Activated T-helper 1 cell treated with anti-CD3 and anti-CD28 coated beads, Interleukin-12 subunit alpha, Interleukin-12 subunit beta, Interleukin-2, Interleukin-4 antibody, amounts not matched to agents 30 ng/mL and 10 ng/mL and 1 ng/mL, durations not matched to agents 14 hours and 24 hours and 36 hours (primary cell): ENCODE measurements at regions of chr12 and their contacts with region 1.

Region 1: DNA sequence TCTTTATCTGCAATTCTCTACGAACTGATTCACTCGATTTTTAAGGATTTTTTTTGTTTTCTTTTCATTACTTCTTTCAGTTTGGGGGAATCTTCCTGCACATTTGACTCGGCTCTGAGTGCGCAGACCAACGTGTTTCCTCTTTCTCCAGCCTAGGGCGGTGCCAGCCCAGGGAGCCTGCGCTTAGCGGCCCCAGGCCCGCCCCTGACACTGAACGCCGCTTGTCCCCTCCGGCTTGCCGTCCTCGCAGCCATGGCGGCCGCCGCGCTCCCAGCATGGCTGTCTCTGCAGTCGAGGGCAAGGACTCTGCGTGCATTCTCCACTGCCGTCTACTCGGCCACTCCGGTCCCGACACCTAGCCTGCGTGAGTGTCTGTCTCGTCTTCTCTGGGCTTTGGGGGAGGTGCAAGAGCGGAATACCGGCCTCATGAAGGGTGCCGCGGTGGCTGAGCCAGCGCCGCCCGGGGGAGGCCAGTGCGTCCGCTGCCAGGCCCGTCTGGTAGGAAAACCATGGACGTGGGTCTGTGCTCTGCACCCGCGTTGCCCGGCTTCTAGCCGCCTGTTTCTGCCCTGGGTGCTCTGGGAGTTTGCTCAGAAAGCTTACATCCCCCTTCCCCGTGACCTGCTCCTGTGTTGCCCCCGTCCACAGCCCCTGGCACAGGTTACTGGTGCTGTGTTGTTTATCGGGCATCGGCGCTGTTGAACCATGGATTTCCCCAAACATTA is at the start of gene MRPS35:
- DNase-seq: peak; percentile 89
- H3K4me3 Mint-ChIP-seq: peak within 1 kb of the TSS; percentile 97
- H3K27ac Mint-ChIP-seq: peak within 1 kb of the TSS; percentile 96
- H3K4me1 Mint-ChIP-seq: peaks cover 26% of the 10 kb centered on the region
- H3K27me3 Mint-ChIP-seq: peaks cover 10% of the 10 kb centered on the region
- total RNA-seq, gene MRPS35: 59.8 and 72.2 TPM in 2 replicates

Region 2: DNA sequence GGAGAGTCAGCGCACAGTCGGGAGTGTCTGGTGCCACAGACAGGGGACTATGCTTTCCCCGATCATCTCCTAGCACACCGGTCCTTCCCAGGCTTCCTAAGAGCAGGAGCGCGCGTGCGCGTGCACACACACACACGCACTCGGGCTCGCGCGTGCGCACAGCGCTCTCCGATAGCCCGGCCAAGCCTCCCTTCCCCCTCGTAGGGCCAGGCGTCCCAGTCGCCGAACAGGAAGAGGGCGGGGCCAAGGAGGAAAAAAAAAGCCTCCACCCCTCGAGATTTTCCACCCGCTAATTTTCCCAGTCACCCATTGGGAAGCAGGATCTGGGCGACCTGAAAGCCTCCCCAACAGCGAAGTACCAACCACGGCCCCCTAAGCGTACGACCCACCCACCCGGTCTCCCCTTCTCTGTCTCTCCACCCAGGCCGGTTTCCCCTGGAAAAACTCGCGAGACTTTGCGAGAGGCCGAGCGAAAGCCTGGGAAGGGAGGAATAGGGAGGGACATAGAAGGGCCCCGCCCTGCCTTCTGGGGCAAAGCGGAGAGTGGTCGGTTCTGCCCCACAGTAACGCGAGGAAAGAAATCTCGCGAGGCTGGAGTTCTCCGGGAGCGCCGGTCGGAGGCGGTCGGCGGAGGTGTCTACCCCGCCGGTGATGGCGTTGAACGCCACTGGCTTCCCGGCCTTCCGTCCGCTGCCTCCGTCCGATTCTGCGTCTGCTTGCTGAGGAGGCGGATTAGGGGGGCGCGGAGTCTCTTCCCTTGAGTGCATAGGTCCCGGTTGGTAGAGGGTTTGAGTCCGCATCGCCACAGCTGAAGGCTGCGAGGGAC is 772.7 kb before region 1 on chr12 and contains the starts of genes FGFR1OP2 and INTS13:
- intact Hi-C with region 1: loop called (anchors 5 kb)
- DNase-seq: peak; percentile 97
- H3K4me3 Mint-ChIP-seq: peak within 1 kb of the TSS; percentile 96
- H3K27ac Mint-ChIP-seq: peak within 1 kb of the TSS; percentile 96
- H3K4me1 Mint-ChIP-seq: peaks cover 82% of the 10 kb centered on the region
- H3K27me3 Mint-ChIP-seq: no peaks in the 10 kb centered on the region
- total RNA-seq, gene FGFR1OP2: 48.3 and 49.9 TPM in 2 replicates
- total RNA-seq, gene INTS13: 43.8 and 52.2 TPM in 2 replicates

Region 3: GRCh38 chr12:26971963-26972362 is 738.8 kb before region 1 on chr12:
- intact Hi-C with region 1: loop called (anchors 1 kb)
- DNase-seq: peak; percentile 60
- H3K4me3 Mint-ChIP-seq: peak overlapping the region; percentile 24
- H3K27ac Mint-ChIP-seq: peak overlapping the region; percentile 74
- H3K4me1 Mint-ChIP-seq: peaks cover 24% of the 10 kb centered on the region
- H3K27me3 Mint-ChIP-seq: no peaks in the 10 kb centered on the region

Region 4: DNA sequence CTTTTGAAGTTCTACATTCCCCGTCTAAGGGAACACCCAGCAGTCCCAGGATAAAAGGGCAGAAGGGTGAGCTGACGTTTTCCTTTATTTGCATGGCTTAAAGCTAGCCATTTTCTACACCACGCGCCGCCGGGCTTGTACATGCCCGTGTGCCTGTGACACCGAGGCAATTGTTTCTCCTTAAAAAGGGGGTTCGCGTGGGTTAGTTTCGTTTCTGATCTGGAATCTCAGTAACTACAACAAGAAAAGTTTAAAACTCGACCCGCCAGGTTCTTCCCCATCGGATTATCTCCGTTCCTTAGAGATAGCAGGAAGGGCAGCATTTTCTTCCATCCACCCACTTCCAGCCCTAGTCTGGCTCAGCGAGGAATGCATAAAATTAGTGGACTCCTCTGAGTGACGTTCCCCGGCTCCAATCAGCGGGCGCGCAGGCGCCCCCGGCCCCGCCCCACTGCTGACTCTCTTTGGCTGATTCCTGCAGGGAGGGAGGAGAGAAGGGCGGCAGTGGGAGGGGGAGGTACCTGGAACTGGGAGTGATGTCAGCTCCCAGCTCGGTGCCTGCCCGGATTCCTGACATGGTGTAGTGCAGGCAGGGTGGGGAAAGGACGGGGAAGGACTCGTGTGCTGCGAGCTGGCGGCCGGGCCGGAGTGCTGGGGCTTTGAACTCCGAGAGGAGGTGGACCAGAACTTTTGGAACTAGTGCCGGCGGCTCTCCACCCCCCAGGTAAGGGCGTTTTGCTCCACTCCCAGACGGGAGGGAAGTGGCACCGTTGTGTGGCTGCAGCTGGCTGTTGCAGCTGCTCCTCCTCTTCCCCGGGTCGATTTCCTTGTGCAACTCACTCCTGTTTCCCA is 186.9 kb before region 1 on chr12 and contains the start of gene PPFIBP1:
- intact Hi-C with region 1: loop called (anchors 2 kb)
- DNase-seq: peak; percentile 83
- H3K4me3 Mint-ChIP-seq: peak within 1 kb of the TSS; percentile 89
- H3K27ac Mint-ChIP-seq: peak within 1 kb of the TSS; percentile 90
- H3K4me1 Mint-ChIP-seq: peaks cover 56% of the 10 kb centered on the region
- H3K27me3 Mint-ChIP-seq: peaks cover 19% of the 10 kb centered on the region
- total RNA-seq, gene PPFIBP1: 53.8 and 55.7 TPM in 2 replicates

Region 5: DNA sequence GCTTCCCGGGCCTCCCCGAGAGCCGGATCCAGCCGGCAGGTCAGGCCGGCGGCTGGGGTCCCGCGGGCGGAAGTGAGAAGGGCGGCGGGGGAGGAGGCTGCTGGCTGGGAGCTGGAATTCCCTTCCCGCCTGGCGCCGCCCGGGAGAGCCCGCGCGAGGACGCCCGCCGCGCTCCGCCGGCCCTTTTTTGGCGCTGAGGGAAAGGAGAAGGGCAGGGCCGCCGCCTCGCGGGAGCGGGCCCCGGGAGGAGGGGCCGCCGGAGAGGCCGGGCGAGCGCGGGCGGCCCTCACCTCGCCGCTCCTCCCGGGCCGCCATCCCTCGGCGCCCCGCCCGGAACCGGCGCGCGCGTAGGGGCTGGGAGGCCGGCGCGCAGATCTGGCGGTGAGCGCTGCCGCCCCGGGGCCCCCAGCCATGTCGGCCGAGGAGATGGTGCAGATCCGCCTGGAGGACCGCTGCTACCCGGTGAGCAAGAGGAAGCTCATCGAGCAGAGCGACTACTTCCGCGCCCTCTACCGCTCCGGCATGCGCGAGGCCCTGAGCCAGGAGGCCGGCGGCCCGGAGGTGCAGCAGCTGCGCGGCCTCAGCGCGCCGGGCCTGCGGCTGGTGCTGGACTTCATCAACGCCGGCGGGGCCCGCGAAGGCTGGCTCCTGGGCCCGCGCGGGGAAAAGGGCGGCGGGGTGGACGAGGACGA is 69.3 kb after region 1 on chr12 and contains the starts of genes KLHL42 and MANSC4:
- intact Hi-C with region 1: loop called (anchors 2 kb)
- DNase-seq: peak; percentile 62
- H3K4me3 Mint-ChIP-seq: peak within 1 kb of the TSS; percentile 84
- H3K27ac Mint-ChIP-seq: peak within 1 kb of the TSS; percentile 75
- H3K4me1 Mint-ChIP-seq: peaks cover 30% of the 10 kb centered on the region
- H3K27me3 Mint-ChIP-seq: peaks cover 19% of the 10 kb centered on the region
- total RNA-seq, gene KLHL42: 19.5 and 21.7 TPM in 2 replicates
- total RNA-seq, gene MANSC4: not detected in 2 replicates

Region 6: DNA sequence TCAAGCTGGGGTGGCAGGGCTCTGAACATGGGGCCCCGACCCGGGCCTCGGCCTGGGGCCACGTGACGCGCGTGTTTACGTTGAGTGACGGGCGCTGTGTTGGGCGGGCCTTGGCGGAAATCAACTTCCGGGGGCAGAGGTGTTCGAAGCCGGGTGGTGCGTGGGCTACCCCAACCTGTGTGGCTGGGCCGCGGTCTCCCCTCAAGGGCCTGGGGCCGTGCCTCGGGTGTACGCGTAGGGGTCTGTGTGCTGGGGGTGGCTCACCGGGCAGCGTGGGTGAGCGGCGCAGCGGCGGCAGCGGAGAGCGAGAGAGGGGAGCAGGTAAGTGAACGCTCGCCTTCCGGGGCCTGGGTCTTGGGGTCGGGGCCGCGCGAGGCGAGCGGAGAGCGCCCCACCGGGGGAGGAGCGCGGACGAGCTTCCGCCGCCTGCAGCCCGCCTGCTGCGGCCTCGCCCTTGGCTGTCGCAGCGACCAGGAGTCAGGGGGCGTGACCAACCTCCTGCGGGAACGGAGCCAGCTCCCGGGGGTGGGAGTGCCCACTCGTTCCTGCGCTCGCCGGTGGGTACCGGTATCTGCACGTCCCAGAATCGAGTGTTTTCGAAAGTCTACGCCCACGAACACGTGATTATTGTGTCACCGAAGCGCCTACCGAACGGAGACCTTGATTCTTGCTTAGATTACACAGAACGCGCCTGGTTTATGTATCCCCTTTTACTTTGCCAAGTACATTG is 479.7 kb after region 1 on chr12 and contains the start of gene CCDC91:
- intact Hi-C with region 1: loop called (anchors 10 kb)
- DNase-seq: peak; percentile 79
- H3K4me3 Mint-ChIP-seq: peak within 1 kb of the TSS; percentile 91
- H3K27ac Mint-ChIP-seq: peak within 1 kb of the TSS; percentile 96
- H3K4me1 Mint-ChIP-seq: peaks cover 39% of the 10 kb centered on the region
- H3K27me3 Mint-ChIP-seq: no peaks in the 10 kb centered on the region
- total RNA-seq, gene CCDC91: 12.9 and 15.0 TPM in 2 replicates